Activated T-helper 1 cell treated with anti-CD3 and anti-CD28 coated beads, Interleukin-12 subunit alpha, Interleukin-12 subunit beta, Interleukin-2, Interleukin-4 antibody, amounts not matched to agents 30 ng/mL and 10 ng/mL and 1 ng/mL, durations not matched to agents 14 hours and 24 hours and 36 hours (primary cell): ENCODE measurements at regions of chr22 and their contacts with region 1.

Region 1: DNA sequence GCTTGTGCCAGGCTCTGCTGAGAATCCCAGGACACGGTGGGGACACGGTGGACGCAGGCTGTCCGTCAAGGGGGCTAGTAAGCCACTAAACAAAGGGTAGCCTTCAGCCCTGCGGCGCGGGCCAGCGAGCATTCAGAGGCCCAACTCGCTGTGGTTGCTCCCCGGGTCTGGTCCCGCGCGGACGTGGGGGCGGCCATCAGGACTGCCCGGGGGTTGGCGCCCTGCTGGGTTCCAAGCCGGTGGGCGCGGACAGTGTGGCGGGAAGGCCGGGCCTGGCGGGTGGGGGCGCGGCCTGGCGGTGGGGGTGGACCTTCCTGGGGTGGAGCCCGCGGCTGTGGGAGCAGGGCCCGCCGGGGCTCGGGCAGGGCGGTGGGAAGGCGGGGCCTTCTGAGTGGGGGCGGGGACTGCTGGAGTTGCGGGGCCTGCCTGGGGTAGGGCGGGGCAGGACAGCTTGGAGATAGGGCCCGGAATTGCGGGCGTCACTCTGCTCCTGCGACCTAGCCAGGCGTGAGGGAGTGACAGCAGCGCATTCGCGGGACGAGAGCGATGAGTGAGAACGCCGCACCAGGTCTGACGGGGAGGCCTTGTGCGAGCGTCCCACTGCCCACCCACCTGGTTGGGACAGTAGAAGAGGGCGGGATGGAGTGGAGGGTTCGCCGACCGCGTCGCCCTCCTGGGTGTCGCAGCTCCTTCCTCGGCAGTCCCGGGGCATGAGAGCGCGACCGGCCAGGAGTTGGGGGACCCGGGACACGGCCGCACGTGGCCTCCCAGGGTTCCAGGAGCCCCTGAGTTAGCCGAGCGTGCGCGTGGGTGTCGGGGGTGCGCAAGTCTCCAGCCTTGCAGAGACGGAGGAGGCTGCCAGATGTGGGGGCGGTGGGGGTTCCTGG is at the start of gene SERHL2:
- DNase-seq: peak; percentile 85
- H3K4me3 Mint-ChIP-seq: peak within 1 kb of the TSS; percentile 87
- H3K27ac Mint-ChIP-seq: peak within 1 kb of the TSS; percentile 52
- H3K4me1 Mint-ChIP-seq: peaks cover 6% of the 10 kb centered on the region
- H3K27me3 Mint-ChIP-seq: no peaks in the 10 kb centered on the region
- total RNA-seq, gene SERHL2: 1.4 and 2.1 TPM in 2 replicates

Region 2: GRCh38 chr22:42520663-42521546 is 32.8 kb before region 1 on chr22:
- intact Hi-C with region 1: loop called (anchors 2 kb)
- DNase-seq: no peak
- H3K4me3 Mint-ChIP-seq: peak overlapping the region; percentile 64
- H3K27ac Mint-ChIP-seq: peak overlapping the region; percentile 40
- H3K4me1 Mint-ChIP-seq: peaks cover 6% of the 10 kb centered on the region
- H3K27me3 Mint-ChIP-seq: peaks cover 2% of the 10 kb centered on the region

Region 3: GRCh38 chr22:42533638-42533977 is 20.1 kb before region 1 on chr22:
- intact Hi-C with region 1: loop called (anchors 2 kb)
- DNase-seq: no peak
- H3K4me3 Mint-ChIP-seq: peak overlapping the region; percentile 67
- H3K27ac Mint-ChIP-seq: peak overlapping the region; percentile 83
- H3K4me1 Mint-ChIP-seq: peaks cover 27% of the 10 kb centered on the region
- H3K27me3 Mint-ChIP-seq: no peaks in the 10 kb centered on the region

Region 4: GRCh38 chr22:42581762-42582716 is 28.3 kb after region 1 on chr22:
- intact Hi-C with region 1: loop called (anchors 2 kb)
- DNase-seq: peak; percentile 77
- H3K4me3 Mint-ChIP-seq: peak overlapping the region; percentile 99
- H3K27ac Mint-ChIP-seq: peak overlapping the region; percentile 83
- H3K4me1 Mint-ChIP-seq: peaks cover 13% of the 10 kb centered on the region
- H3K27me3 Mint-ChIP-seq: no peaks in the 10 kb centered on the region